ENCODE measurements at regions of chr14 and their contacts with region 1.

Region 1: DNA sequence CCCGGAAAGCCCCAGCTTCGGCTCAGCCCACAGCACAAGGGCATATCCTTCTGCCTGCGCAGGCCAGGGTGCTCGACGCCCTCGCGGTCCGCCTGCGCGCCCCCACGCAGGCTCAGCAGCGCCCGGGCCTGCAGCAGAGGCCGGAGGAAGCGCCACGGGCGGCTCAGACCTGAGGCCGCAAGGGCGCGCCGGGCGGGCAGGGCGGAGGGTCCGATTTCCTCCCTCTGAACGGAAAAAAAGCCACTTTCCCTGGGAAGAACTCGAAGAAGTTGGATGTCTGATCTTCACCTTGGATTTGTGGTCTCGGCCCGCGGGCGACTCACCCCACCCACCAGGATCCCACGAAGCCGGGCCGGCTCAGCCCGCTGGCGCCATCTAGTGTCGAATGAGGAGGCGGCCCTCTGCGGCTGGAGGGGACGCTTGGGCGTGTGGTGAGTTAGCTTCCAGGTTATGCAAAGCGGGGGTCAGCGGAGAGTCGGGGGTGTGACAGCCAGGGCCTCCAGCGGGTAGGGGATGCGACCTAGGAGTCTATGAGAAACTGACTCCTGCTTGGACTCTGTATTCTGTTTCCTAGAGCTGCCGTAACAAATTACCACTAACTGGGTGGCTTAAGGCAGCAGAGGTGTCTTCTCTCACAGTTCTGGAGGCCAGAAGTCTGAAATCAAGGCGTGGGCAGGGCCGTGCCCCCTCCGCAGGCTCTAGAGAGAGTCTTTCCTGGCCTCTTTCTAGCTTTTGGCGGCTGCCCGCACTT is 40.0 kb upstream of the SRSF5 start:
- DNase-seq: peak; percentile 96
- H3K4me3 ChIP-seq: peak overlapping the region in 7 of 8 donors; percentile 29 to 63 (median 36)
- H3K27ac ChIP-seq: peak overlapping the region; percentile 10 to 88 (median 78)
- H3K4me1 ChIP-seq: peaks cover 10 to 51% (median 34%) of the 10 kb centered on the region in 6 donors
- H3K27me3 ChIP-seq: no peaks in the 10 kb centered on the region
- CTCF ChIP-seq: peak; percentile 95 to 99 (median 98)
- POLR2A ChIP-seq: no peak

Region 2: DNA sequence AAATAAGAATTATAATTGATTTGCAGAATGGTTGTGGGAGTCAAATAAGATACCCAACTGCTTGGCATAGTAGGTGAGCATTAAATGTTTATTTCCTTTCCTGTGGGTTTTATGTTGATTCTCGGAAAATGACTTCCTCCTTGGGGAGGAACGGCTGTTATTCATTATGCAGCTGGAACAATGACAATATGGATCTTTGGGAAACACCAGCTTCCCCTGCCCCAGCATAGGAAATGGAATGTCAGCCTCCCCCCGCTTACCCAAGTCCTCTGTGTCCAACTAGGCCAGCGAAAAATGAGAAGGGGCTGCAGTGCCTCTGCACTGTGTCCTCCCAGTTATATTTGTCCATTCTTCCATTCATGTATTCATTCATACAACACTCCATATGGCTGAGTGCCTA is 140.5 kb before region 1 on chr14:
- intact Hi-C with region 1: loop called (anchors 5 kb)
- DNase-seq: no peak
- H3K4me3 ChIP-seq: no peak overlapping the region
- H3K27ac ChIP-seq: no peak overlapping the region
- H3K4me1 ChIP-seq: peaks cover 0 to 20% (median 0%) of the 10 kb centered on the region in 6 donors
- H3K27me3 ChIP-seq: no peaks in the 10 kb centered on the region
- CTCF ChIP-seq: no peak
- POLR2A ChIP-seq: no peak

Region 3: GRCh38 chr14:69600304-69600891 is 126.5 kb before region 1 on chr14:
- intact Hi-C with region 1: loop called (anchors 5 kb)
- DNase-seq: no peak
- H3K4me3 ChIP-seq: no peak overlapping the region
- H3K27ac ChIP-seq: no peak overlapping the region
- H3K4me1 ChIP-seq: peaks cover 0 to 12% (median 0%) of the 10 kb centered on the region in 6 donors
- H3K27me3 ChIP-seq: no peaks in the 10 kb centered on the region
- CTCF ChIP-seq: no peak
- POLR2A ChIP-seq: no peak

Region 4: GRCh38 chr14:69803753-69804152 is 76.8 kb after region 1 on chr14:
- intact Hi-C with region 1: no loop called
- DNase-seq: no peak
- H3K4me3 ChIP-seq: no peak overlapping the region
- H3K27ac ChIP-seq: no peak overlapping the region
- H3K4me1 ChIP-seq: no peaks in the 10 kb centered on the region
- H3K27me3 ChIP-seq: no peaks in the 10 kb centered on the region
- CTCF ChIP-seq: no peak
- POLR2A ChIP-seq: no peak

Region 5: GRCh38 chr14:70213721-70214282 is 486.9 kb after region 1 on chr14:
- intact Hi-C with region 1: no loop called
- DNase-seq: no peak
- H3K4me3 ChIP-seq: no peak overlapping the region
- H3K27ac ChIP-seq: no peak overlapping the region
- H3K4me1 ChIP-seq: no peaks in the 10 kb centered on the region
- H3K27me3 ChIP-seq: peaks cover 0 to 13% (median 0%) of the 10 kb centered on the region in 7 donors
- CTCF ChIP-seq: no peak
- POLR2A ChIP-seq: no peak